Uterus (tissue), 4 donors: ENCODE measurements at regions of chr3 and their contacts with region 1.

Region 1: GRCh38 chr3:112822069-112823055 is 24.3 kb downstream of the CD200R1L start:
- DNase-seq: no peak
- H3K4me3 ChIP-seq: no peak overlapping the region
- H3K27ac ChIP-seq: no peak overlapping the region
- H3K4me1 ChIP-seq: no peaks in the 10 kb centered on the region
- H3K27me3 ChIP-seq: no peaks in the 10 kb centered on the region
- CTCF ChIP-seq: no peak
- POLR2A ChIP-seq: no peak

Region 2: GRCh38 chr3:112582244-112582874 is 240.0 kb before region 1 on chr3:
- intact Hi-C with region 1: loop called (anchors 10 kb)
- DNase-seq: peak; percentile 29 to 47
- H3K4me3 ChIP-seq: no peak overlapping the region
- H3K27ac ChIP-seq: no peak overlapping the region
- H3K4me1 ChIP-seq: peaks cover 0 to 4% of the 10 kb centered on the region in 2 donors
- H3K27me3 ChIP-seq: no peaks in the 10 kb centered on the region
- CTCF ChIP-seq: peak; percentile 52 to 78 (median 60)
- POLR2A ChIP-seq: no peak